ENCODE measurements at regions of chr22 and their contacts with region 1.

Region 1: DNA sequence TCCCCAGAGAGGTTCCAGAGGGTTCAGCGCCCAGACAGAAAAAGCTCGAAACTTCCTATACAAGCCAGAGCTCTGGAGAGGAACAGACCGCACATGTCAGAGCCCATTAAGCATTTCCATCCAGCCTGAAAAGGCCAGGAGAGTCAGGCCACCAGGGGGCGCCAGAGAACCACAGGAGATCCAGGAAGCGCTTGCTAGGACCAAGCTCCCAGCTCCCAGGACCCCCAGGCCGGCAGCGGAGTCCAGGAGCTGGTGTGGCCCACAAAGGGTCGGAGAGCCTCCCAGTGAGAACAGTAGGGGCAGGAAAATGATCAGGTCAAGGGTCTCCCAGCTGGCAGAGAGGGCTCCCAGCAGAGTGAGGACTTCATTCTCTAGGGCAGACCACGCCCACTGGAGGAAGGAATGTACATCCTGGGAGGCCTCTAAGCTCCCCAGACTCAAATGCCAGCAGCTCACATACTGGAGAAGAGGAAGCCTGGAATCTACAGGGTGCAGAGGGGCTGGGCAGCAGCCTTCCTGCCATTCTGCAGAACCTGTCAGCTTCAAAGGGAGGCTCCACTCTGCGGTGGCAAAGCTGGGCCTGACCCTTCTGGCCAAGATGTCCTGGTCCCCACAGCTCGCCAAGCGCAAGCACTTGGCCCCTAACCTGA is 2.1 kb upstream of the MEI1 start:
- DNase-seq: peak; percentile 27
- H3K4me3 ChIP-seq: no peak overlapping the region
- H3K27me3 ChIP-seq: no peaks in the 10 kb centered on the region
- CTCF ChIP-seq: peak; percentile 97

Region 2: DNA sequence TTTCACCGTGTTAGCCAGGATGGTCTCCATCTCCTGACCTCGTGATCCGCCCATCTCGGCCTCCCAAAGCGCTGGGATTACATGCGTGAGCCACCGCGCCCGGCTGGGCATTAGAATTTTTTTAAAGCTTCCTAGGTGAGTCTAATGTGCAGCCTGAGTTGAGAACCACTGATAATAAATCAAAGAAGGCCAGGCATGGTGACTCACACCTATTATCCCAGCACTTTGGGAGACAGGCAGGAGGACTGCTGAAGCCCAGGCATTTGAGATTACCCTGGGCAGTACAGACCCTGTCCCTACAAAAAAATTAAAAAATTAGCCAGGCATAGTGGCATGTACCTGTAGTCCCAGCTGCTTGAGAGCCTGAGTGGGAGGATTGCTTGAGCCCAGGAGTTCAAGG is 15.8 kb after region 1 on chr22:
- CTCF ChIA-PET with region 1: interaction called, 13 read pairs
- POLR2A ChIA-PET with region 1: no interaction called
- DNase-seq: no peak
- H3K4me3 ChIP-seq: no peak overlapping the region
- H3K27me3 ChIP-seq: peaks cover 5% of the 10 kb centered on the region
- CTCF ChIP-seq: no peak

Region 3: GRCh38 chr22:41739576-41739975 is 42.3 kb after region 1 on chr22:
- CTCF ChIA-PET with region 1: interaction called, 10 read pairs
- POLR2A ChIA-PET with region 1: no interaction called
- DNase-seq: no peak
- H3K4me3 ChIP-seq: no peak overlapping the region
- H3K27me3 ChIP-seq: peaks cover 4% of the 10 kb centered on the region
- CTCF ChIP-seq: no peak

Region 4: DNA sequence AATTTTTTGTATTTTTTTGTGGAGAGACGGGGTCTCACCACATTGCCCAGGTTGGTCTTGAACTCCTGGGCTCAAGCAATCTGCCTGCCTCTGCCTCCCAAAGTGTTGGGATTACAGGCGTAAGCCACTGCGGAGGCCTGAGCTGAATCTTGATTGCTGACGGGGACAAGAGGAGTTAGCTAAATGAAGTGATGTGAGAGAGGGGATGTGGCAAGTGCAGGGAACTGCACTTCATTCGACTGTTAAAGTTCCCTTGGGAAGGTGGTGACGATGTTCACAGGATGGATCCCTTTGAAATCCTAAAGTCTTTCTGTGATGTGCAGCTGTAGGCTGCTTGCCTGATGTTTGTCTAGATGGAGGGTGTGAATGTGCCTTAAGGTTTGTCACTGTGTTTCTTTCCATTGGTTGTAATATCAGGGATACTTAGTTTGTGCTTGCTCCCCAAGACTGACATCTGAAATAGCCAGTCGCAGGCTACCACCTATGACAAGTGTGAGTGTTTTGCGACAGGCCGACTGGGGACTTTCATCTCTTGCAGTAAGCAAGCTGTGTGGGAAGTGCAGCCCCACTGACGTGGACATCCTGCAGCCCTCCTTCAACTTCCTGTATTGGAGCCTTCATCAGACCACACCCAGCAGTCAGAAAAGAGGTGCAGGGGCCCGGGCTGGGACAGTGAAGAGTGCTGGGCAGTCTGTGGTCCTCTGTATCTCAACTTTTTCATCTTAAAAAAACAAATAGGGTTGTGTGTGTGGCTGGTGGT is 83.7 kb after region 1 on chr22:
- CTCF ChIA-PET with region 1: no interaction called
- POLR2A ChIA-PET with region 1: no interaction called
- DNase-seq: no peak
- H3K4me3 ChIP-seq: no peak overlapping the region
- H3K27me3 ChIP-seq: no peaks in the 10 kb centered on the region
- CTCF ChIP-seq: no peak

Region 5: GRCh38 chr22:41800348-41801146 is 103.3 kb after region 1 on chr22 and contains the start of gene CCDC134:
- CTCF ChIA-PET with region 1: interaction called, 18 read pairs
- POLR2A ChIA-PET with region 1: no interaction called
- DNase-seq: no peak
- H3K4me3 ChIP-seq: peak within 1 kb of the TSS; percentile 79
- H3K27me3 ChIP-seq: no peaks in the 10 kb centered on the region
- CTCF ChIP-seq: no peak
- polyA plus RNA-seq, gene CCDC134: 4.1 and 6.0 TPM in 2 replicates

Region 6: GRCh38 chr22:41857155-41857859 is 160.1 kb after region 1 on chr22:
- CTCF ChIA-PET with region 1: interaction called, 13 read pairs
- POLR2A ChIA-PET with region 1: no interaction called
- DNase-seq: no peak
- H3K4me3 ChIP-seq: no peak overlapping the region
- H3K27me3 ChIP-seq: no peaks in the 10 kb centered on the region
- CTCF ChIP-seq: peak; percentile 66

Region 7: GRCh38 chr22:41899992-41900651 is 202.9 kb after region 1 on chr22:
- CTCF ChIA-PET with region 1: no interaction called
- POLR2A ChIA-PET with region 1: no interaction called
- DNase-seq: no peak
- H3K4me3 ChIP-seq: no peak overlapping the region
- H3K27me3 ChIP-seq: no peaks in the 10 kb centered on the region
- CTCF ChIP-seq: no peak

Region 8: GRCh38 chr22:41946629-41947423 is 249.6 kb after region 1 on chr22 and contains the start of gene CENPM:
- CTCF ChIA-PET with region 1: interaction called, 119 read pairs
- POLR2A ChIA-PET with region 1: no interaction called
- DNase-seq: peak; percentile 55
- H3K4me3 ChIP-seq: peak within 1 kb of the TSS; percentile 61
- H3K27me3 ChIP-seq: no peaks in the 10 kb centered on the region
- CTCF ChIP-seq: no peak
- polyA plus RNA-seq, gene CENPM: 18.6 and 30.4 TPM in 2 replicates